ENCODE measurements at regions of chr11 and their contacts with region 1.

Region 1: GRCh38 chr11:44565211-44565952 is at the start of gene CD82:
- DNase-seq: peak; percentile 99
- H3K4me3 Mint-ChIP-seq: peak within 1 kb of the TSS; percentile 84
- H3K27ac Mint-ChIP-seq: peak within 1 kb of the TSS; percentile 78
- H3K4me1 Mint-ChIP-seq: peaks cover 74% of the 10 kb centered on the region
- H3K27me3 Mint-ChIP-seq: no peaks in the 10 kb centered on the region

Region 2: DNA sequence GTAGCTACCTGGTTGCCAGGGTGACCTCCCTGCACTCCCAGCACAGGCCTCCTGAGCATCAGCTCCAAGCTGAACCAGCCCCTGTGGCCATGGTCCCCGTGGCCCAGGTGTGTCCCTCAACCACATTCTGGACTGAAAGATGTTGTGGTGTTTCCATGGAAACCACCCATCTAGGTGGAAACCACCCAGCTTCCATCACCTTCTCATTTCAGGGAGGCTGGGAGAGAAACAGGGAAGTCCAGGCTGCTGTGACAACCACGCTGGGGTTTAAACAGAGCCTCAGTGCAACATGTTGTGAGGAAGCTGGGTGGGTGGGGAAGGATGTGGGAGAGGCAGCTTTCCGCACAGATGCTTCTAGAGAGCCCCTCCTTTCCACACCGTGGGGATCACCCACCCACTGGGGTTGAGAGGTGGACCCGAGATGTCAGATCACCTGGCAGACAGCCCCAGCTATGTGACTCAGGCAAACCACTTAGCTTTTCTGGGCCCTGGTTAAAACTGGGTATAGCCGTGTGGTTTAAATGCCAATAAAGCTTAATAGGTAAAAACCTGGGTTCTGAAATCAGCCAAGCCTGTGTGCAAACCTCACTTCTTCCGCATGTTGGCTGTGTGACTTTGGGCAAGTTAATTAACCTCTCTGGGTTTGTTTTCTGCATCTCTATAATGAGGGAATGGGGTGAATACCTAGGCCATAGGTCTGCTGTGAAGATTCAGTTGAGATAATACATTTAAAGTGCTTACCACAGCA is 46.5 kb after region 1 on chr11:
- CTCF ChIA-PET with region 1: interaction called, 403 read pairs
- DNase-seq: peak; percentile 77
- H3K4me3 Mint-ChIP-seq: no peak overlapping the region
- H3K27ac Mint-ChIP-seq: peak overlapping the region; percentile 78
- H3K4me1 Mint-ChIP-seq: peaks cover 91% of the 10 kb centered on the region
- H3K27me3 Mint-ChIP-seq: no peaks in the 10 kb centered on the region

Measured in activated naive CD4-positive, alpha-beta T cell treated with anti-CD3 and anti-CD28 coated beads, Interleukin-2, amount 10 ng/mL, durations not matched to agents 7 days and 5 days (primary cell).